Right ventricle myocardium inferior (tissue), 1 donor: ENCODE measurements at regions of chr9 and their contacts with region 1.

Region 1: GRCh38 chr9:89428901-89429890 is 68.7 kb downstream of the SEMA4D start:
- DNase-seq: no peak
- ATAC-seq: no peak

Region 2: DNA sequence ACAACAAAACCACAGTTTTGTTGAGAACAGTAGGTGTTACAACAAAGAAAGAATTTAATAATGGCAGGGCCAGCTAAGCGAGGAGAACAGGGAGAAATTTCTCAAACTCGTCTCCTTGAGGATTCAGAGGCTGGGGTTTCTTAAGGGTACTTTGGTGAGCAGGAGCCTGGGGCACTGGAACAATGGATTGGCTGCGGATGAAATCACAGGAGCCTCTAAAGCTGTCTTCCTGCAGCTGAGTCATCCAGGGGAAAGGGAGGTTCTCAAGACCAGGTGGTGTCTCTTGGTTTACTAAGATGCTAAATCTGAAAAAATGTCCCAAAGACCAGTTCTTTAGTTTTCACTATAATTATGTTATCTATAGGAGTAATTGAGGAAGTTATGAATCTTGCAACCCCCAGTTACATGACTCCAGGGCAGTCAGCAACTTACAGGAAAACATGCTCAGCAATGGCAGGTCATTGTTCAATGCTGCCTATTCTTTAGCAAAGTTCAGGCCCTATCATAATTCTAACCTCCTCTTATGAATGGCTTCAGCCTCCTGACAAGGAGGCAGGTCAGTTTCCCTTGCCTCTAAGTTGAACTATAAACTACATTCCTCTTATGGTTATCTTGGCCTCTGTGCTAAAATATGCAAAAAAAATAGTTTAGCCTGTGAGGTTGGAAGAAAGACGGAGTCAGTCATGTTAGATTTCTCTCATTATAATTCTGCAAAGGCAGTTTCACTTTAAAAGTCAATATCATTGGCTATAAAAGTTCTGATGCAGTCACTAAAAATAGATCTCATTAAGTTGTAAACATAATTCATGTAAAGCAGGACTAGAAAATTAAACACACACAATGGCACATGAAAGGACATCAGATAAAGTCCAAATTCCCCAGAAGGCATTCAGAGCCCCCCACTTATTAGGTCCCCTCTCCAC is 181.5 kb before region 1 on chr9:
- intact Hi-C with region 1: no loop called
- DNase-seq: no peak
- ATAC-seq: no peak

Region 3: DNA sequence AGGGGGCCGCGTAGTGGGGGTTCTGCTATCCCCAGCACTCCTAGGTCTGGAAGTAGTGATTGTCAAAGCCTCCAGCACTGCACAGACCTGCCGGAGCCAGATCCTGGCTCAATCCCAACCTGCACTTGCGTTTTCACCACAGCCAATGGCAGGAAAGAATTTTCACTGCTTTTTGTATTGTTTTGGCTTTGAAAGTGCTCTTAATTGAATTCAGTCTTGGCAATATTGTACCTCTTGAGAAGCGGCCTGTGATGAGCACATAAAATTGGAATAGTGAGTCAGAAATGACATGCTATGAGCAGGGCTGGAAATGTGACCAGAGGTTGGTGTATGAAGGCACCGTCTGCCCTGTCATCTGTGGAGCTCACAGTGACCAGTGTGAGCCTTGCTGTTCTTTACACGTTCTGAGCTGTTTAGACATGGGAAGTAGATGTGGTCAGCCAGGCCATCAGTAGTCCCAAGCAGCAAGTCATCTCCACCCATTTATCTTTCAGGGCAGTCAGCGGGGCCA is 69.4 kb before region 1 on chr9:
- intact Hi-C with region 1: loop called (anchors 10 kb)
- DNase-seq: no peak
- ATAC-seq: no peak